Naive thymus-derived CD4-positive, alpha-beta T cell (primary cell): ENCODE measurements at regions of chr6 and their contacts with region 1.

Region 1: GRCh38 chr6:32244946-32245398 is 21.1 kb upstream of the NOTCH4 start:
- DNase-seq: peak; percentile 38 to 70 (median 61)
- ATAC-seq: peak; percentile 84
- H3K4me3 ChIP-seq: peak overlapping the region; percentile 5
- H3K4me3 Mint-ChIP-seq: peak overlapping the region; percentile 3 to 79 (median 68)
- H3K27ac ChIP-seq: no peak overlapping the region
- H3K27ac Mint-ChIP-seq: peak overlapping the region in 7 of 9 donors; percentile 14 to 56 (median 36)
- H3K4me1 ChIP-seq: peaks cover 0 to 4% of the 10 kb centered on the region in 2 donors
- H3K4me1 Mint-ChIP-seq: peaks cover 7 to 26% (median 9%) of the 10 kb centered on the region in 7 donors
- H3K27me3 ChIP-seq: no peaks in the 10 kb centered on the region
- H3K27me3 Mint-ChIP-seq: peaks cover 0 to 26% (median 0%) of the 10 kb centered on the region in 5 donors

Region 2: GRCh38 chr6:32118782-32119628 is 126.0 kb before region 1 on chr6:
- CTCF ChIA-PET with region 1: interaction called, 7 read pairs
- POLR2A ChIA-PET with region 1: no interaction called
- intact Hi-C with region 1: loop called (anchors 1 to 2 kb)
- DNase-seq: peak; percentile 50 to 73 (median 62)
- ATAC-seq: peak; percentile 89
- H3K4me3 ChIP-seq: no peak overlapping the region
- H3K4me3 Mint-ChIP-seq: no peak overlapping the region
- H3K27ac ChIP-seq: no peak overlapping the region
- H3K27ac Mint-ChIP-seq: peak overlapping the region in 8 of 9 donors; percentile 10 to 81 (median 68)
- H3K4me1 ChIP-seq: no peaks in the 10 kb centered on the region
- H3K4me1 Mint-ChIP-seq: peaks cover 5 to 24% (median 18%) of the 10 kb centered on the region in 7 donors
- H3K27me3 ChIP-seq: no peaks in the 10 kb centered on the region
- H3K27me3 Mint-ChIP-seq: no peaks in the 10 kb centered on the region

Region 3: DNA sequence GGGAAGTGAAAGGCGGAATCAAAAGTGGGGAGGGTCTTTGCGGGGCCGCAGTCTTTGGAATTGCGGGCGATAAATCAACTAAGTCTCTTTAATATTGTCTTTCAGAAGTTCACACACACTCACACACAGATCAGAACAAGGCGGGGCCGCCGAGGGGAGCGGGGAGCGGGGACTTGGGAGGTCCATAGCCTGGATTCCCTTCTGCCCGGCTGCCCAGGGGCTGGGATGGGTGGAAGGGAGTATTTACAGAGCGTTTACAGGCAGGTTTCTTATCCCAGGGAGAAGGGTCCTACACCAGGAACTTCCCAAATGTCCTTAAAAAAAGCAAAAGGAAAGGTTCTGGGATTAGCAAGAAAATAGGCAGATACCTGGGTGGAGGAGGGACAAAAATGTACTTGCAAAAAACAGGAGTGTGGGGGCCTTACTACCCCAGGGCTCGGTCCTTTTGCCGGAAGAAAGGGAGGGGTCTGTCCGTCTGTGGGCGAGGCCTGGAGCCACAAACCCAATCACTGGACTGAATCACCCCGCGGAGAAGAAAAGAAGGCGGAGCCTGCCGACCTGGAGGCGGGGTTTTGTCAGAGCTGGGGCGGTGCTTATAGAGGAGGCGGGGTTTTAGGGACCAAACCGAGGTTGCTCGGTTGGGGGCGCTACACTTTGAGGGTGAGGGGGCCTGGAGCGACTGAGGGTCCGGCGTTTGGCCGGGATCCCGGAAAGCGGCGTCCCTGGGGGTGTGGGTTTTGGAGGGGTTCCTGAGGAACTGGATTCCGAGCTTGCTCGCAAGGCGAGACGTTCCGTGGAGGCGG is 96.5 kb before region 1 on chr6:
- CTCF ChIA-PET with region 1: interaction called, 5 read pairs
- POLR2A ChIA-PET with region 1: no interaction called
- intact Hi-C with region 1: loop called in 1 of 2 experiments (anchors 10 kb)
- DNase-seq: peak; percentile 62 to 82 (median 72)
- ATAC-seq: peak; percentile 91
- H3K4me3 ChIP-seq: peak overlapping the region; percentile 30
- H3K4me3 Mint-ChIP-seq: peak overlapping the region; percentile 75 to 91 (median 86)
- H3K27ac ChIP-seq: peak overlapping the region; percentile 47
- H3K27ac Mint-ChIP-seq: peak overlapping the region; percentile 46 to 91 (median 85)
- H3K4me1 ChIP-seq: peaks cover 0 to 22% of the 10 kb centered on the region in 2 donors
- H3K4me1 Mint-ChIP-seq: peaks cover 37 to 49% (median 46%) of the 10 kb centered on the region in 7 donors
- H3K27me3 ChIP-seq: no peaks in the 10 kb centered on the region
- H3K27me3 Mint-ChIP-seq: peaks cover 0 to 62% (median 12%) of the 10 kb centered on the region in 5 donors

Region 4: DNA sequence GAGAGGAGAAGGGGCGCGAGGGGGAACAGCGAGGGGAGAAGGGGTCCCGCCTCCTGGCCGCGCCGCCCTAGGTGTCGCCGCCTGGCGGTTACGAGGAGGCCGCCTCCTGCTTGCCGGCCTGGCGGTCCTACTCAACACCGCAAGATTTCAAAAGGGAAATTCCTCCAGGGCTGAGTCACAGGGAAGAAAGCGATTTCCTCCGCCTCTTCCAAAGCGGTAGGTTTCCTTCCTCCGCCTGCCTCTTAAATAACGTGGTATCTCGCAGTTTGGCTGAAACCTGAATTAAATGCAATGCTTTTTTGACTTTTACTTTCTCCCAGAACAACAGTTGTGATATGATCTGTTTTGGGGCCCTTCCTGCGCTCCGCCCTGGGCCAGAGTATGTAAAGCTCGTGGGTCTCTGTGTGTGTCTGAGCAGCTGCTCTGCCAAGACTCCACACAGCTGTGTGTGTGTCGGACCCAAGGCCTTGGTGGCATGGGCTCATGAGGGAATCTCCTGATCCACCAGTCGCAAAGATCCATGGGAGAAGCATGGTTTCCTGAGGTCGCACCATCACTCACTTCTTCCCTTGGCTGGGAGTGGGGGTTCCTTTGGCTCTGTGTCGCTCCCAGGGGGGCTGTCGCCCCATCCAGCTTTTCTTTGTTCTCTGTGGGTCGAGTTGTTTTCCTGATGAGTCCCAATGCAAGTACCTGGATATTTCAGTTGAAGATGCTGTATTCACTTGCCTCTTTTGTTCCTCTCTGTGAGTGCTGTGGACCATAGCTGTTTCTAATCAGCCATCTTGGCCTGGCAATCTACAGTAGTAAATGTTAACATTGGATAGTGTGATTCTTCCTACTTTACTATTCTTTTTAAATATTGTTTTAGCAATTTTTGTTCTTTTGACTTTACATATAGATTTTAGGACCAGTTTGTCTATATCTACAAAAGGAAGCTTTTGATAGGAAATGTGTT is 10.5 kb after region 1 on chr6:
- CTCF ChIA-PET with region 1: interaction called, 3 read pairs
- POLR2A ChIA-PET with region 1: no interaction called
- intact Hi-C with region 1: loop called in 1 of 2 experiments (anchors 1 kb)
- DNase-seq: peak in 8 of 9 donors; percentile 27 to 71 (median 36)
- ATAC-seq: peak; percentile 95
- H3K4me3 ChIP-seq: peak overlapping the region; percentile 6
- H3K4me3 Mint-ChIP-seq: peak overlapping the region; percentile 63 to 86 (median 75)
- H3K27ac ChIP-seq: peak overlapping the region; percentile 47
- H3K27ac Mint-ChIP-seq: peak overlapping the region; percentile 7 to 82 (median 65)
- H3K4me1 ChIP-seq: peaks cover 0 to 14% of the 10 kb centered on the region in 2 donors
- H3K4me1 Mint-ChIP-seq: peaks cover 15 to 37% (median 28%) of the 10 kb centered on the region in 7 donors
- H3K27me3 ChIP-seq: no peaks in the 10 kb centered on the region
- H3K27me3 Mint-ChIP-seq: peaks cover 0 to 51% (median 0%) of the 10 kb centered on the region in 5 donors

Region 5: DNA sequence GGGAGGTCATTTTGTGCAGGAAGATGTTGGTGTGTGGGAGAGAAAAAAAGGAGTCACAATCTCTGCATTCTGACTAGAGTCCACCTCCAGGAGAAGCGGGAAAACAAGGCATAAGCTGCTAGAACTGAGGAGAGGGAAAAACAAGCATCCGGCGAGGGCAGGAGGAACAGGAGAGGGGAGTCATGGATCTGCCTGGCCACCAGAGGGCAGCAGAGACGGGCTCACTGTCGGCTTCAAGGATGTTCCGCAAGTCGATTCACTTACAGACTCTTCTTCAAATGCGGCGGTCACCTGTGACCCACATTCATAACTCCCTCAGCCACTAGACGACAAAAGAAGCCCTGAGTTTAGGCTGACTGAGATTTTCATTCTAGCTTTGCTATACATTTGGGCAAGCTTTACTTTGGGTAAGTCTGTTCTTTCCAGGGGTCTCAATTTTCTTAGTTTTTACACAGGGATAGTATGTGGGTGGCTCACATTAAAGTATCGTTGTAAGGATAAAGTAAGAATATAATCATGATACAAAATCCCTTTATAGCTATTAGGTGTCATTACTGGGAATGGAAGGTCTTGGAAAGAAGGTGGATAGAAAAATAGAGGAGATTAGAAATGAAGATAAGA is 168.6 kb after region 1 on chr6:
- CTCF ChIA-PET with region 1: interaction called, 7 read pairs
- POLR2A ChIA-PET with region 1: no interaction called
- intact Hi-C with region 1: loop called (anchors 1 to 2 kb)
- DNase-seq: peak; percentile 54 to 85 (median 79)
- ATAC-seq: peak; percentile 96
- H3K4me3 ChIP-seq: no peak overlapping the region
- H3K4me3 Mint-ChIP-seq: no peak overlapping the region
- H3K27ac ChIP-seq: no peak overlapping the region
- H3K27ac Mint-ChIP-seq: no peak overlapping the region
- H3K4me1 ChIP-seq: no peaks in the 10 kb centered on the region
- H3K4me1 Mint-ChIP-seq: peaks cover 3 to 14% (median 8%) of the 10 kb centered on the region in 7 donors
- H3K27me3 ChIP-seq: peaks cover 0 to 3% of the 10 kb centered on the region in 2 donors
- H3K27me3 Mint-ChIP-seq: peaks cover 30 to 62% (median 45%) of the 10 kb centered on the region in 5 donors

Region 6: GRCh38 chr6:32700391-32701040 is 455.5 kb after region 1 on chr6:
- CTCF ChIA-PET with region 1: no interaction called
- POLR2A ChIA-PET with region 1: no interaction called
- intact Hi-C with region 1: loop called in 1 of 2 experiments (anchors 5 kb)
- DNase-seq: peak in 6 of 9 donors; percentile 15 to 54 (median 38)
- ATAC-seq: peak; percentile 68
- H3K4me3 ChIP-seq: no peak overlapping the region
- H3K4me3 Mint-ChIP-seq: peak overlapping the region in 7 of 10 donors; percentile 25 to 61 (median 46)
- H3K27ac ChIP-seq: no peak overlapping the region
- H3K27ac Mint-ChIP-seq: no peak overlapping the region
- H3K4me1 ChIP-seq: no peaks in the 10 kb centered on the region
- H3K4me1 Mint-ChIP-seq: peaks cover 0 to 9% (median 5%) of the 10 kb centered on the region in 7 donors
- H3K27me3 ChIP-seq: no peaks in the 10 kb centered on the region
- H3K27me3 Mint-ChIP-seq: peaks cover 26 to 69% (median 43%) of the 10 kb centered on the region in 5 donors

Region 7: DNA sequence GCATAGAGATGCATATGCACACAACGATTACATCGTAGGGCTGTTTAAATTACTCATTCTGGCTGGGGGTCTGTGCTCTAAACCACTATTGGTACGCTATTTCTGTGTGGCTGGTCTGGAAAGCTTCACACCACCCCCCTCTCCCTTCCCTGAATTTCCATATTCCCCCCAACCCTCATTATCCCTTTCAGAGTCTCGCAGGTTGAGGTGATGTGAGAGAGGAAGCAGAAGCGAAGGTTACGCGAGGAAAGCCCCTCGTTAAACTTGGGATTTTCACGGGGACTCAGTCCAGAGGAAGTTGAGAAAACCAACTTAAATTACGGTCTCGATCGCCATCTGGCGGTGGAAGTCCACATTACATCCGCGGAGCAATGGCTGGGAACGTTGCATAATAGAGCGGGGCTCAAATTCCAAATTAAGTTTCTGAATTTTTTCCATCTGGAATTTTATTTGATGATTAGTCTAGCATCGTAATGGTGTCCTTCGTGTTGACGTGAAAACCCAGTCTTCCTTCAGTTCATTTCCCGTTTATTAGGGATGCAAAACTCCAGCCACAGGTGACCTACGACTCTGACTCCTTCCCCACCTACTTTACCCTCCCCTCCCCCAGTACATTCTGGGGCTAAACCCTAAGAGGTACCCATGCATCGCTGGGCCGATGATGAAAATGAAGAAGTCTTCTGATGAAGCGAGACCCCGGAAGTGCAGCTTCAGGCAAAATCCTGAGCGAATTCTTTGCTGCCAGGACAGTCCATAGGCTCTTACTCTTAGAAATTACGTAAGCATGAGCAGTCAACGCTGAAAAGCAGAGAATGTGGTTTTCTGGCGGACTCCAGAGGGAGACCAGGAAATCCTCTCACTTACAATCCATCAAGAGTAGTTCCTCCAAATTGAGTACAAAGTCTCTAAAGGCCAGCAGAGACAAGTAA is 552.1 kb after region 1 on chr6:
- CTCF ChIA-PET with region 1: interaction called, 3 read pairs
- POLR2A ChIA-PET with region 1: no interaction called
- intact Hi-C with region 1: loop called (anchors 2 to 10 kb)
- DNase-seq: peak; percentile 38 to 79 (median 62)
- ATAC-seq: peak; percentile 80
- H3K4me3 ChIP-seq: no peak overlapping the region
- H3K4me3 Mint-ChIP-seq: peak overlapping the region in 9 of 10 donors; percentile 35 to 80 (median 68)
- H3K27ac ChIP-seq: no peak overlapping the region
- H3K27ac Mint-ChIP-seq: peak overlapping the region in 1 of 9 donors; percentile 23
- H3K4me1 ChIP-seq: peaks cover 5 to 16% of the 10 kb centered on the region in 2 donors
- H3K4me1 Mint-ChIP-seq: peaks cover 15 to 35% (median 27%) of the 10 kb centered on the region in 7 donors
- H3K27me3 ChIP-seq: peaks cover 0 to 5% of the 10 kb centered on the region in 2 donors
- H3K27me3 Mint-ChIP-seq: peaks cover 0 to 70% (median 29%) of the 10 kb centered on the region in 5 donors